CD4-positive, alpha-beta memory T cell (primary cell): ENCODE measurements at regions of chr21 and their contacts with region 1.

Region 1: DNA sequence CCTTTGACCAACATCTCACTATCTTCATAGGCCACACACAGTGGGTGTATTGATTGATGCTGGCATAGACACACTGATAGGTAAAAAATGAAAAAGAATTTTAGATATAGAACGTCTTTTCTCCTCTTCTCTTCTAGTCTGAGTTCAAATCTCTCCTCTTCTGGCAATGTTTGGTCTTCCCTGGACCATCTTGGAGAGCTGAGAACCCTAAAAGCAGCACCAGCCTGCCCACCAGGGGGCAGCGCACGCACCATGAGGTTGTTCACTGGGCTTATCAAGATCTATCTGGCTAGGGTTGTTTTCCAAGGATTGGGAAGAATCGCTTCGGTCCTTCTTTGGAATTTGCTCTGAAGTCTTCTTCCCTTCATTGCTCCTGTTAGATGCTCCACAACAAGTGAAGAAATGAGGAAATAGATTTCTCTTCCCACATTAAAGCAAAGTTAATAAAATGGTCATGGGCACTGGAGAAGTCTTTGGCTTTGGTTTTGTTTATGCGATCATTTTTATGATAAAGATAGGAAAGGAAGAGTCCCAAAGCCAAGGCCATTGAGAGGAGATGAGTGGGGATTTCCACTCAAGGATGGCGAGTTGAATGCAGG is 104.0 kb upstream of the OLIG2 start:
- DNase-seq: peak in 3 of 5 donors; percentile 18 to 35 (median 20)
- H3K4me3 ChIP-seq: no peak overlapping the region
- H3K4me3 Mint-ChIP-seq: no peak overlapping the region
- H3K27ac ChIP-seq: no peak overlapping the region
- H3K27ac Mint-ChIP-seq: peak overlapping the region in 1 of 7 donors; percentile 82
- H3K4me1 ChIP-seq: peaks cover 2% of the 10 kb centered on the region
- H3K4me1 Mint-ChIP-seq: peaks cover 5 to 17% (median 8%) of the 10 kb centered on the region in 4 donors
- H3K27me3 ChIP-seq: no peaks in the 10 kb centered on the region
- H3K27me3 Mint-ChIP-seq: no peaks in the 10 kb centered on the region

Region 2: DNA sequence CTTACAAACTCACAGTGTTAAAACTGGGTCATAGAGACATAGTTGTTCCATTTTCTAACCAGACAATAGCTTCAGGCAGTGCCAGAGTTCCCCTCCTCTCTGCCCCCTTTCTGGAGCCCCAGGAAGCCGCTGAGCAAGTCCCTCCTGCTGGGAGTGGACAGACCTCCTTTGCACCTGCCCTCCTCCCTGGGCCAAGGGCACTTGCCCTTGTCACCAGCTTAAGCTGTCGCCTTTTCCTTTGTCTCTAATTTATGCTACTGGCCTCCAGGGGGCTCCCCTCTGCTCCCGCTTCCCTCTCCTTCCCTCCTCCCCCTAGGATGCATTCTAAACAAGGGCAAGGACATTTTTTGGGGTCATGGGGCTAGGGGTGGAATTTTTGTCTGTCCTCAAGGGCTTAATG is 825.3 kb before region 1 on chr21:
- CTCF ChIA-PET with region 1: no interaction called
- POLR2A ChIA-PET with region 1: no interaction called
- intact Hi-C with region 1: no loop called
- DNase-seq: no peak
- H3K4me3 ChIP-seq: no peak overlapping the region
- H3K4me3 Mint-ChIP-seq: no peak overlapping the region
- H3K27ac ChIP-seq: no peak overlapping the region
- H3K27ac Mint-ChIP-seq: no peak overlapping the region
- H3K4me1 ChIP-seq: no peaks in the 10 kb centered on the region
- H3K4me1 Mint-ChIP-seq: no peaks in the 10 kb centered on the region
- H3K27me3 ChIP-seq: no peaks in the 10 kb centered on the region
- H3K27me3 Mint-ChIP-seq: peaks cover 9 to 10% of the 10 kb centered on the region in 2 donors

Region 3: DNA sequence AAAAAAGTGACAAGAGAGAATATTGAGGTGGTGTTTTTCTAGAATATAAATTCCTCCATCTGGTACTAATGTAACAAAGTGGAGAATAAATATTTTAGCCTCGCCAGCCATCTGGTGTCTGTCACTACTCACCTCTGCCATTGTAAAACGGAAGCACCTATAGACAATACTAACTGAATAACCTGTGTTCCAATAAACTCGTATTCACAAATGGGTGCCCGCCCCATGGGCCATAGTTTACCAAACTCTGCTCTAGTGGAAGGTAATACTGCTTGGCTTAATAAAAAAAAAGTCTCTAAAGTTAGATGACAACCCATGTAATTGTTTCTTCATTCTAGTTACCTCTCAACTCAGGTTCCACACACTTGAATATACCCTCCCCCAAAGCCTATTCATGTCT is 651.0 kb before region 1 on chr21:
- CTCF ChIA-PET with region 1: no interaction called
- POLR2A ChIA-PET with region 1: no interaction called
- intact Hi-C with region 1: no loop called
- DNase-seq: no peak
- H3K4me3 ChIP-seq: no peak overlapping the region
- H3K4me3 Mint-ChIP-seq: no peak overlapping the region
- H3K27ac ChIP-seq: no peak overlapping the region
- H3K27ac Mint-ChIP-seq: no peak overlapping the region
- H3K4me1 ChIP-seq: no peaks in the 10 kb centered on the region
- H3K4me1 Mint-ChIP-seq: peaks cover 2 to 5% (median 3%) of the 10 kb centered on the region in 4 donors
- H3K27me3 ChIP-seq: no peaks in the 10 kb centered on the region
- H3K27me3 Mint-ChIP-seq: no peaks in the 10 kb centered on the region

Region 4: GRCh38 chr21:32886339-32886738 is 35.4 kb before region 1 on chr21:
- CTCF ChIA-PET with region 1: interaction called, 14 read pairs
- POLR2A ChIA-PET with region 1: no interaction called
- intact Hi-C with region 1: no loop called
- DNase-seq: peak; percentile 38 to 59 (median 51)
- H3K4me3 ChIP-seq: peak overlapping the region; percentile 41 to 53
- H3K4me3 Mint-ChIP-seq: peak overlapping the region; percentile 83 to 92 (median 89)
- H3K27ac ChIP-seq: peak overlapping the region; percentile 53
- H3K27ac Mint-ChIP-seq: peak overlapping the region; percentile 65 to 95 (median 90)
- H3K4me1 ChIP-seq: peaks cover 11% of the 10 kb centered on the region
- H3K4me1 Mint-ChIP-seq: peaks cover 13 to 19% (median 15%) of the 10 kb centered on the region in 4 donors
- H3K27me3 ChIP-seq: no peaks in the 10 kb centered on the region
- H3K27me3 Mint-ChIP-seq: peaks cover 0 to 2% of the 10 kb centered on the region in 2 donors

Region 5: DNA sequence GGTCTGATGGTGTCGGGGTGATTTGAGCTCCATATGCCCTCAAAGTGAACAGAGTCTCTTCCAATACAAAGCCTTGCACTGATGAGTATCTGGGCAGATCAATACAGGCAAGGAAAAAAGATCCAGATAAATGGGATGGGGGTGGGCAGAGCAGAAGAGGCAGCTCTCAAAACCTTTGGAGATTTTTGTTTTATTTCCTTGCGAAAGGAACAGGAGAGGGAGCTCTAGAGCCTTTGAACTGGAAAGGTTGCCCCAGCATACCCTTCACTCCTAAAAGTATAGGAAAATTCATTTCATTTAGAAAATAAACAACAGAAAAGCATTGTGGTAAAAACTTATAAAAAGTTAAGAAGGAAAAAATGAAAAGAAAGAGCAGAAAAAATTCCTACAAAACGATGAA is 72.6 kb after region 1 on chr21:
- CTCF ChIA-PET with region 1: no interaction called
- POLR2A ChIA-PET with region 1: no interaction called
- intact Hi-C with region 1: no loop called
- DNase-seq: no peak
- H3K4me3 ChIP-seq: no peak overlapping the region
- H3K4me3 Mint-ChIP-seq: no peak overlapping the region
- H3K27ac ChIP-seq: no peak overlapping the region
- H3K27ac Mint-ChIP-seq: peak overlapping the region in 1 of 7 donors; percentile 19
- H3K4me1 ChIP-seq: no peaks in the 10 kb centered on the region
- H3K4me1 Mint-ChIP-seq: no peaks in the 10 kb centered on the region
- H3K27me3 ChIP-seq: no peaks in the 10 kb centered on the region
- H3K27me3 Mint-ChIP-seq: peaks cover 19 to 22% of the 10 kb centered on the region in 2 donors

Region 6: DNA sequence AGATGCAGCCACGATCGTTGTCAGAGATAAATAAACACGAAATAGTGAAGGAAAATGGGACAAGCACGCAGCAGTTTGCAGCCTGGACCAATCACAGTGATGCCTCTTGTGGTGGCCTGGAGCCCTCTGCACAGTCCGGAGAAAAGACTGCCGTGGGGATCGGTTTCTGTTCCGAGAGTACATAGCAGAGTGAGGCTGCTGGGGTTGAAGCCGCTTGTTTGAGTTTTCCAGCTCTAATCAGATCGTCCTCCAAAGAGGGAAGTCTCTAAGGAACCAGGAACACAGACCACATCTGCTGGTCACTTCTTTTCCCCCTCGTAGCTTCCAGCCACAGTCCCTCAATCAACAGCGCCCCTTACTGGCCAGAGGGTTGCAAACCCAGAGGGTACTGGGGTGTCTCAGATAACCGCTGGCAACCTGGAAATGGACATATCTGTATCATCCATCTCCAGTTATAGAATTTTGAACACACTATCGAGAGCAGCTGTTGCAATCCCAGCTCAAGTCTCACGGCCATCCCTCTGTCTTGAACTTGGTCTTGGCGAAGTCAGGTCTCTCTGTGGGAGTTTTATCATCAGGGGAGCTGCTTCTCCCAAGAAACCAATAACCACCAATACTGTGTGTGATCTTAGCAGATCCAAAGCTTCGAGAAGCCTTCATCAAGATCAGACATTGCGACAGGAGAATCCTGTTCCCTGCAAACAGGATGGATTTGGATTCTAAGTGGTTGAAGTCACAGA is 205.6 kb after region 1 on chr21:
- CTCF ChIA-PET with region 1: interaction called, 3 read pairs
- POLR2A ChIA-PET with region 1: no interaction called
- intact Hi-C with region 1: loop called (anchors 2 kb)
- DNase-seq: peak; percentile 31 to 48 (median 41)
- H3K4me3 ChIP-seq: peak overlapping the region in 1 of 2 donors; percentile 20
- H3K4me3 Mint-ChIP-seq: peak overlapping the region in 7 of 8 donors; percentile 73 to 82 (median 75)
- H3K27ac ChIP-seq: no peak overlapping the region
- H3K27ac Mint-ChIP-seq: no peak overlapping the region
- H3K4me1 ChIP-seq: peaks cover 7% of the 10 kb centered on the region
- H3K4me1 Mint-ChIP-seq: peaks cover 4 to 7% (median 6%) of the 10 kb centered on the region in 4 donors
- H3K27me3 ChIP-seq: no peaks in the 10 kb centered on the region
- H3K27me3 Mint-ChIP-seq: peaks cover 12 to 25% of the 10 kb centered on the region in 2 donors